CD4-positive, alpha-beta memory T cell (primary cell): ENCODE measurements at regions of chr1 and their contacts with region 1.

Region 1: DNA sequence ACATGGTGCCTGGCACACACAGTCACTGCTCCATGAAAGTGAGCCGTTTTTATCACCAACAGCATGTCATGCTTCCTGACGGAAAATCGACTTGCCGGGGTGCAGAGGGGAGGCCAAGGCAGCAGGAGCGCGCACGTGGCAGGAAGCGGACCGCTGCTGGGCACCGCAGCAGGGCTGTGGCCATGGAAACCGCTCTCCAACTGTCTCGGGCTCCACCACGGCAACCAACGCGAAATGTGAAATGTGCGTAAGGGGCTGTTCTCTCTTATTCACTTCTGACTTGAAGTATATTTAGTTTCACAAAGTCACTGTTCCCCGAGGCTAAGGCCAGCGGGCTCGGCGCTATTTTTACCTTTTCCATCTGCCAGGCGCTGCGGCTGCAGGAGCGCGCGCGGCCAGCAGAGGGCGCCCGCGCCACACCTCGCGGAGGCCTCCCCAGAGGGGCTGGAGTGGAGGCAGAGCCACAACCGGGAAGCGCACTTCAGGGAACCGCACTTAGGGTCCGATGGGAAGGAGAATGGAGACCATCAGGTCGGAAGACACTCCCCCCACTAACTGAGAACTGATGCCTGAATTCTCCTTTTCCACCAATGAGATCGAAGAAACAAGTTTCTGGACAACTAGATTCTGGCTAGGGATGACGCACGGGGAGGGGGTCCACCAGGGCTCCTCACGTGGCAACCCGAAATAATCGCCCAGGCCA is 19.7 kb downstream of the RCC2 start:
- DNase-seq: peak in 4 of 5 donors; percentile 57 to 70 (median 60)
- H3K4me3 ChIP-seq: no peak overlapping the region
- H3K4me3 Mint-ChIP-seq: no peak overlapping the region
- H3K27ac ChIP-seq: no peak overlapping the region
- H3K27ac Mint-ChIP-seq: peak overlapping the region in 4 of 7 donors; percentile 8 to 85 (median 46)
- H3K4me1 ChIP-seq: no peaks in the 10 kb centered on the region
- H3K4me1 Mint-ChIP-seq: peaks cover 0 to 10% (median 3%) of the 10 kb centered on the region in 4 donors
- H3K27me3 ChIP-seq: no peaks in the 10 kb centered on the region
- H3K27me3 Mint-ChIP-seq: no peaks in the 10 kb centered on the region

Region 2: GRCh38 chr1:17439250-17440073 is 19.7 kb after region 1 on chr1 and contains the start of gene RCC2:
- CTCF ChIA-PET with region 1: interaction called, 8 read pairs
- POLR2A ChIA-PET with region 1: no interaction called
- intact Hi-C with region 1: loop called (anchors 2 kb)
- DNase-seq: peak; percentile 70 to 78 (median 72)
- H3K4me3 ChIP-seq: peak within 1 kb of the TSS; percentile 79 to 81
- H3K4me3 Mint-ChIP-seq: peak within 1 kb of the TSS; percentile 94 to 98 (median 96)
- H3K27ac ChIP-seq: peak within 1 kb of the TSS; percentile 78
- H3K27ac Mint-ChIP-seq: peak within 1 kb of the TSS; percentile 95 to 98 (median 97)
- H3K4me1 ChIP-seq: peaks cover 27% of the 10 kb centered on the region
- H3K4me1 Mint-ChIP-seq: peaks cover 21 to 49% (median 32%) of the 10 kb centered on the region in 4 donors
- H3K27me3 ChIP-seq: no peaks in the 10 kb centered on the region
- H3K27me3 Mint-ChIP-seq: no peaks in the 10 kb centered on the region
- total RNA-seq, gene RCC2: 38.5 to 41.2 TPM

Region 3: DNA sequence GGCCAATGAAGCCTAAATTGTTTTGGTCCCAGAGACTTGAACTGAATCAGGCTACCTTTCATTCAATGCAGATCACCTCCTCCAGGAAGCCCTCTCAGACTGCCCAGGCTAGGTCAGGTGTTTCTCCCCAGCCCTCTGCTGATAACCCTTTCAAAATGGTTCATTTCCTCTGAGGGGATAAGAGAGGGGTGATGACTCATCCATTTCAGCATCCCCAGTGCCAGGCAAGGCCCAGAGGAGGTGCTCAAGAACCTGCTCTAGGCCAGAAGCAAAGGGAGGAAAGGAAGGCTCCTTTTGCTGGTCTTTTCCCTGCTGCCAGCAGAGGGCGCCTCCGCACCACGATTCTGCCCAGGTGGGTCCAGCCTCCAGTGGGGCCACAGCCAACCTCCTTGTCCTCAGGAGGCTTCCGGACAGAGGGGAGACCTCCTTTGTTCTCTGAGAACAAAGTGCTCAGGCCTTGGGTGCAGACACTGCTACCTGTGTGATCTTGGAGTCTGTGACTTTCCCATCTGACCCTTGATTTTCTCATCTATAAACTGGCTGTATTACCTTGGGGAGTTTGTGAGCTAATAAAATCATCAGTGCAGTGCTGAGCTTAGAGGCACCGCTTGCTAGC is 74.4 kb after region 1 on chr1:
- CTCF ChIA-PET with region 1: interaction called, 4 read pairs
- POLR2A ChIA-PET with region 1: no interaction called
- intact Hi-C with region 1: loop called (anchors 5 kb)
- DNase-seq: peak; percentile 32 to 53 (median 37)
- H3K4me3 ChIP-seq: no peak overlapping the region
- H3K4me3 Mint-ChIP-seq: no peak overlapping the region
- H3K27ac ChIP-seq: no peak overlapping the region
- H3K27ac Mint-ChIP-seq: no peak overlapping the region
- H3K4me1 ChIP-seq: no peaks in the 10 kb centered on the region
- H3K4me1 Mint-ChIP-seq: peaks cover 0 to 3% (median 0%) of the 10 kb centered on the region in 4 donors
- H3K27me3 ChIP-seq: no peaks in the 10 kb centered on the region
- H3K27me3 Mint-ChIP-seq: peaks cover 3 to 12% of the 10 kb centered on the region in 2 donors